ENCODE measurements at regions of chr11 and their contacts with region 1.

Region 1: GRCh38 chr11:65833297-65834030 is at the start of gene SNX32:
- H3K4me3 Mint-ChIP-seq: no peak within 1 kb of the TSS
- H3K27ac Mint-ChIP-seq: no peak within 1 kb of the TSS
- H3K4me1 Mint-ChIP-seq: peaks cover 23% of the 10 kb centered on the region
- H3K27me3 Mint-ChIP-seq: peaks cover 24% of the 10 kb centered on the region

Region 2: DNA sequence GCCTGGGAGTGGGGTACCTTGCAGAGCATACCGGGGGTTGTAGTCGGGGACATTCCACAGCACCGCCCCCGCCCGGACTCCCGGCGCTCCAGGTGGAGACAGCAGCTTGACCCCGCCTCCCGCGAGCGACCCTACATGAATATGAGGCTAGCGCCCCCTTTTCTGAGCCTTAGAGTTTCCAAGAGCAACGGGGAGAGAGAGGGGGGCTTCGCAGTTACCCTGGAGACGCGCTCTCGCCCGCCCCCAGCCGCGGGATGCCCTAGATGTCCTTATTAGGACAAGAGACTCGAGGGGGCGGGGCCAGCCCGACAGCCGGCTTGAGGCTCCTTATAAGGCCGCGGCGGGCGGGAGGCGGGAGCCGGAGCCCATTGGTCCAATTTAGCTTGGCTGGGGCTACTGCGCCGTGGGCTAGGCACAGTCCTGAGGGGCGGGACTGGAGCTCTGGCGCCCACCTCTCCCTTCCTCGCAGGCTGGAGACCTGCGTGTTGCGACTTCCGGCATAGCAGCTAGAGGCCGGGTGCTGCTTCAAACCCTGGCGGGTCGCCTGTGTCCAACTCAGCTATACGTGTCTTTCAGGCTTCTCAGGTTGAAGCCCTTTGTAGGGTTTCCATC is 25.8 kb after region 1 on chr11:
- intact Hi-C with region 1: loop called (anchors 2 kb)
- H3K4me3 Mint-ChIP-seq: peak overlapping the region; percentile 82
- H3K27ac Mint-ChIP-seq: peak overlapping the region; percentile 96
- H3K4me1 Mint-ChIP-seq: peaks cover 72% of the 10 kb centered on the region
- H3K27me3 Mint-ChIP-seq: no peaks in the 10 kb centered on the region

Region 3: GRCh38 chr11:65873318-65874156 is 40.1 kb after region 1 on chr11:
- intact Hi-C with region 1: no loop called
- H3K4me3 Mint-ChIP-seq: peak overlapping the region; percentile 96
- H3K27ac Mint-ChIP-seq: peak overlapping the region; percentile 95
- H3K4me1 Mint-ChIP-seq: peaks cover 59% of the 10 kb centered on the region
- H3K27me3 Mint-ChIP-seq: peaks cover 25% of the 10 kb centered on the region

Region 4: DNA sequence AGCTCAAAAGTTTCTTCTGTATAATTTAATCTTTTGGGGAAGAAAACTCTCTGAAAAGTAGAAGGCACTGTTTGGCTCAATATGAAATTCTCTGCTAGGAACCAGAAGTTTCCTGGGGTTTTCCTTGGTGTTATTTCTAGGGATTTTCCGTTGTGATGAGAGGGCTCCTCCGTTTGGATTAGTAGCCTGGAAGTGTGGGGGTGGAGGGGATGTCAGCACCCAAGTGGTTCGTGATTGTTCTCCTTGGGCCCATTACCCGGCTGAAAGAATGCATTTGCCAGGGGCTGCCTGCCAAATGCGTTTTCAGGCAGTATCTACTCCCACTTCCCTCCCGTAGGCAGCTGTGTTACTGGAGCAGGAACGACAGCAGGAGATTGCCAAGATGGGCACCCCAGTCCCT is 223.0 kb after region 1 on chr11:
- intact Hi-C with region 1: no loop called
- H3K4me3 Mint-ChIP-seq: no peak overlapping the region
- H3K27ac Mint-ChIP-seq: no peak overlapping the region
- H3K4me1 Mint-ChIP-seq: peaks cover 11% of the 10 kb centered on the region
- H3K27me3 Mint-ChIP-seq: no peaks in the 10 kb centered on the region